ENCODE measurements at regions of chr12 and their contacts with region 1.

Region 1: DNA sequence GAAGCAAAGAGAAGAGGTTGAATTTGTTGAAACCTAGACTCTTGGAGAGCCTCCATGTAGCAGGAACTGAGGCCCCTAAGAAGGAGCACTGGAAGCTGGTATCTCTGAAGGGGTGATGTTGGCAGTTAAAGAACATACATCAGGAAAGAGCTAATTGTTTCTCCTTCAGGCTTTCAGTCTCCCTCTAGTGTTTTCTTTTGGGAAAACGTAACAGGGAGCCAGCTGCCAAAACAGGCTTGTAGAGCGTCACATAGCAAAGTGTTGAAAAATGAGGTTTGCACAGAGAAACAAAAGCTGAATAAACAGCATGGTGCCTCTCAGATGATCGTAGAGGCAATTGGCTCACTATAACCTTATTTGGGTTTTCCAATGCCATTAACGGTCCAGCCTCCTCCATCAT is 46.9 kb upstream of the CAND1 start:
- DNase-seq: peak; percentile 4
- ATAC-seq: peak; percentile 64
- H3K4me3 ChIP-seq: no peak overlapping the region
- H3K27ac ChIP-seq: no peak overlapping the region
- H3K4me1 ChIP-seq: no peaks in the 10 kb centered on the region
- H3K27me3 ChIP-seq: peaks cover 47% of the 10 kb centered on the region
- CTCF ChIP-seq: peak; percentile 10 to 44 (median 40); a peak in 4 of 6 replicates
- POLR2A ChIP-seq: no peak
- RAD21 ChIP-seq: no peak

Region 2: DNA sequence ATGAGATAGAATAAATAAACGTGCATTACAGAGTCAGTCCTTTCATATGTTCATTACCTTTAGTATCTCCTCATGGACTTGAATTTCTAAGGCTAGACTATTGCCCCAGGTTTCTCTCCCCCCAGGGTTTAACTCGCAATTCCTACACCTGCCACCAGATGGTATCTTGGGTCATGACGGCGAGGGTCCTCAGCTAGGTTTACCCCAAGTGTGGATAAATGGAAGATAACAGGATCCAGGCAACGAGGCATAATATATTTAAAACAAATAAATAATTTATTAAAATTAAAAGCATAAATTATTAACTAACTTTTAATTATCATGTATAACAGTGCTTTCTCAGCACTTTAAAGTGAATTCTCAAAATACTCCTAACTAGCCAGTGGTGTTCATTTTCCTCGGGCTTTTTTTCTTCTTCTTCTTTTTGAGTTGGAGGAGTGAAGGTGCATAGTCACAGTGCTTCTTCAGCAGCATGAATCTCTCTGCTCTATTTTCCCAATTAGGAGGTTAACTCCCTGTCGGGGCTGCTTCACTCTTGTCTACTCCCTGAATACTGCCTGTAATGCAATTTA is 196.7 kb before region 1 on chr12:
- CTCF ChIA-PET with region 1: no interaction called
- POLR2A ChIA-PET with region 1: no interaction called
- RAD21 ChIA-PET with region 1: no interaction called
- intact Hi-C with region 1: loop called (anchors 5 kb)
- DNase-seq: no peak
- ATAC-seq: peak; percentile 81
- H3K4me3 ChIP-seq: no peak overlapping the region
- H3K27ac ChIP-seq: no peak overlapping the region
- H3K4me1 ChIP-seq: no peaks in the 10 kb centered on the region
- H3K27me3 ChIP-seq: peaks cover 43% of the 10 kb centered on the region
- CTCF ChIP-seq: peak in 2 of 3 experiments; percentile 61 to 75; a peak in 4 of 6 replicates
- POLR2A ChIP-seq: no peak
- RAD21 ChIP-seq: peak; percentile 43; the same call in 1 of the 2 replicates

Region 3: GRCh38 chr12:67161322-67161918 is 60.9 kb before region 1 on chr12:
- CTCF ChIA-PET with region 1: interaction called, 14 read pairs
- POLR2A ChIA-PET with region 1: no interaction called
- RAD21 ChIA-PET with region 1: interaction called in 1 of 2 experiments, 5 read pairs
- intact Hi-C with region 1: no loop called
- DNase-seq: no peak
- ATAC-seq: peak; percentile 75
- H3K4me3 ChIP-seq: no peak overlapping the region
- H3K27ac ChIP-seq: no peak overlapping the region
- H3K4me1 ChIP-seq: no peaks in the 10 kb centered on the region
- H3K27me3 ChIP-seq: peaks cover 34% of the 10 kb centered on the region
- CTCF ChIP-seq: peak; percentile 30 to 75 (median 71); a peak in 5 of 6 replicates
- POLR2A ChIP-seq: no peak
- RAD21 ChIP-seq: peak; percentile 42; the same call in 1 of the 2 replicates

Measured in HCT116 (cell line).